Heart right ventricle (tissue), 16 donors: ENCODE measurements at regions of chr9 and their contacts with region 1.

Region 1: GRCh38 chr9:17229945-17230560 is 95.2 kb downstream of the CNTLN start:
- DNase-seq: no peak
- ATAC-seq: no peak
- H3K4me3 ChIP-seq: no peak overlapping the region
- H3K27ac ChIP-seq: no peak overlapping the region
- H3K4me1 ChIP-seq: no peaks in the 10 kb centered on the region
- H3K27me3 ChIP-seq: no peaks in the 10 kb centered on the region
- CTCF ChIP-seq: no peak

Region 2: GRCh38 chr9:17191082-17191481 is 39.0 kb before region 1 on chr9:
- intact Hi-C with region 1: no loop called
- DNase-seq: no peak
- ATAC-seq: no peak
- H3K4me3 ChIP-seq: no peak overlapping the region
- H3K27ac ChIP-seq: no peak overlapping the region
- H3K4me1 ChIP-seq: peaks cover 0 to 11% (median 0%) of the 10 kb centered on the region in 9 donors
- H3K27me3 ChIP-seq: no peaks in the 10 kb centered on the region
- CTCF ChIP-seq: no peak

Region 3: DNA sequence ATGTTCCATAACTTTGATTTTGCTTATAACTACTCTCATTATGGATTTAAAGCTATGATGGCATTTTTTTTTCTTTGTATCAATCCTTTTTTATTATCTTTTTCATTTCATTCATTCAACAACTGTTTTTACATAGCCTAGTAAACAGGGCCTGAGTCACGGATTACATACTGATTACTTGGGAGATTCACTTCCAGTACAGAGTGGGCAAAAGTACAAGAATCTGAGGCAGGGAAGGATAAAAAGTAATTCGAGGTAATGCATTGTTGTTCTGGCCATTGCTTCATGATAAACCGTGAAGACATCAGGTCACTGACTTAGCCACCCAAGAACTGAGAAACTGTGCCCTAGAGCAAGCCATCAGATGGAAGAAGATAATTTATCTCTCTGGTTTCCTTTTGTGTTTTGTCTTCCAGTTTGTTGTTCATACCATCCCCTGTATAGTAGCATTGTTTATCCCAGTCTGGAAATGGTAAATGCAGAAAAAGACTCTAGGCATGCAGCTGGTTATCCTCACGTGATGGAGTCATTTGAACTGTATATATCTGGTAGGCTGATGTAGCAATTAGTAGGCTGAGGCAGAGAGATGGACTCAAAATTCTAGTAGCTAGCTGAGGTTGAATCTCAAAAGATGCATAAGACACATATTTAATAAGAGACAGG is 50.4 kb after region 1 on chr9:
- intact Hi-C with region 1: no loop called
- DNase-seq: no peak
- ATAC-seq: no peak
- H3K4me3 ChIP-seq: no peak overlapping the region
- H3K27ac ChIP-seq: no peak overlapping the region
- H3K4me1 ChIP-seq: no peaks in the 10 kb centered on the region
- H3K27me3 ChIP-seq: no peaks in the 10 kb centered on the region
- CTCF ChIP-seq: no peak

Region 4: DNA sequence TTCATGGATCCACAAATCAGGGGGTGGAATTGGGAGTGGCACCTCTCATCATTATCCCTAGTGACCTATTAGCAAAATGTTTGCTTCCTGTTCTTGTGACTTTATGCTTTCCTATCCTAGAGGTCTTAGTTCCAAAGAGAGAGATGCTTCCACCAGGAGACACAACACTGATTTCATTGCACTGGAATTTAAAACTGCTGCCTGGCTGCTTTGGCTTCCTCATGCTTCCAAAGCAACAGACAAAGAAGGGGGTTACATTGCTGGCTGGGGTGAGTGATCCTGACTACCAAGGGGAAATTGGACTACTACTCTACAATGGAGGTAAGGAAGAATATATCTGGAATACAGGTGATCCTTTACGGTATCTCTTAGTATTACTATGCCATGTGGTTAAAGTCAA is 279.6 kb after region 1 on chr9:
- intact Hi-C with region 1: loop called in 1 of 10 experiments (anchors 5 kb)
- DNase-seq: no peak
- ATAC-seq: no peak
- H3K4me3 ChIP-seq: no peak overlapping the region
- H3K27ac ChIP-seq: no peak overlapping the region
- H3K4me1 ChIP-seq: no peaks in the 10 kb centered on the region
- H3K27me3 ChIP-seq: no peaks in the 10 kb centered on the region
- CTCF ChIP-seq: no peak